CD4-positive, alpha-beta memory T cell (primary cell): ENCODE measurements at regions of chr1 and their contacts with region 1.

Region 1: GRCh38 chr1:2044510-2045319 is 5.5 kb upstream of the PRKCZ start:
- DNase-seq: peak; percentile 71 to 85 (median 80)
- H3K4me3 ChIP-seq: peak overlapping the region in 1 of 2 donors; percentile 1
- H3K4me3 Mint-ChIP-seq: peak overlapping the region in 6 of 8 donors; percentile 55 to 78 (median 64)
- H3K27ac ChIP-seq: no peak overlapping the region
- H3K27ac Mint-ChIP-seq: peak overlapping the region in 2 of 7 donors; percentile 61 to 63
- H3K4me1 ChIP-seq: peaks cover 16% of the 10 kb centered on the region
- H3K4me1 Mint-ChIP-seq: peaks cover 7 to 32% (median 17%) of the 10 kb centered on the region in 4 donors
- H3K27me3 ChIP-seq: no peaks in the 10 kb centered on the region
- H3K27me3 Mint-ChIP-seq: peaks cover 0 to 6% of the 10 kb centered on the region in 2 donors

Region 2: DNA sequence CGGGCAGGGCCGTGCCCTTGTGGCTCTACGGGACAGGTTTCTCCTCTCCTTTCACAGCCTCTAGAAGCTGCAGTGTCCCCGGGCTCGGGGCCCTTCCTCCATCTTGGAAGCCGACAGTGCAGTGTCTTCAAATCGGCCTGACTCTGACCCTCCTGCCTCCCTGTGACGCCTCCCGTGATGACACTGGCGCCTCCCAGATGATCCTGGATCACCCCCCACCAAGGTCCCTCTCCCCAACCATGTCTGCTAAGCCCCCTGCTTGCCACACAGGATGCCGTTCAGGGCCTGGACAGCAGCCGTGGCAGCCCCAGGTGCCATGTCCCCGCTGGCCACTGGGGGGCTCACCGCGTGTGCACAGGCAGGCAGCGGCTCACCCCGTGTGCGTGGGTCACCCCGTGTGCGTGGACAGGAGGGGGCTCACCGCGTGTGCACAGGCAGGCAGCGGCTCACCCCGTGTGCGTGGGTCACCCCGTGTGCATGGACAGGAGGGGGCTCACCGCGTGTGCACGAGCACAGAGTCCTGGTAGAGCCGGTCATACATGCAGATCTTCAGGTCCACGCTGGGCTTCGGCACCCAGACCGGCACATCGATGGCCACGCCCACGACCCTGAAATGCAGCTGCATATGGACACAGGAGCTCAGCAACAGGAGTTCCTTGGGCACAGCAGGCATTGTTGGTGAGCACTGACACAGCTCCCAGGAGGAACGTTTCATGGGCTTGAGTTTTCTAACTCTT is 100.7 kb before region 1 on chr1:
- CTCF ChIA-PET with region 1: interaction called, 40 read pairs
- POLR2A ChIA-PET with region 1: interaction called, 3 read pairs
- intact Hi-C with region 1: no loop called
- DNase-seq: peak in 4 of 5 donors; percentile 45 to 48 (median 46)
- H3K4me3 ChIP-seq: no peak overlapping the region
- H3K4me3 Mint-ChIP-seq: peak overlapping the region in 6 of 8 donors; percentile 15 to 63 (median 48)
- H3K27ac ChIP-seq: no peak overlapping the region
- H3K27ac Mint-ChIP-seq: no peak overlapping the region
- H3K4me1 ChIP-seq: peaks cover 4% of the 10 kb centered on the region
- H3K4me1 Mint-ChIP-seq: peaks cover 0 to 5% (median 2%) of the 10 kb centered on the region in 4 donors
- H3K27me3 ChIP-seq: no peaks in the 10 kb centered on the region
- H3K27me3 Mint-ChIP-seq: peaks cover 0 to 2% of the 10 kb centered on the region in 2 donors

Region 3: DNA sequence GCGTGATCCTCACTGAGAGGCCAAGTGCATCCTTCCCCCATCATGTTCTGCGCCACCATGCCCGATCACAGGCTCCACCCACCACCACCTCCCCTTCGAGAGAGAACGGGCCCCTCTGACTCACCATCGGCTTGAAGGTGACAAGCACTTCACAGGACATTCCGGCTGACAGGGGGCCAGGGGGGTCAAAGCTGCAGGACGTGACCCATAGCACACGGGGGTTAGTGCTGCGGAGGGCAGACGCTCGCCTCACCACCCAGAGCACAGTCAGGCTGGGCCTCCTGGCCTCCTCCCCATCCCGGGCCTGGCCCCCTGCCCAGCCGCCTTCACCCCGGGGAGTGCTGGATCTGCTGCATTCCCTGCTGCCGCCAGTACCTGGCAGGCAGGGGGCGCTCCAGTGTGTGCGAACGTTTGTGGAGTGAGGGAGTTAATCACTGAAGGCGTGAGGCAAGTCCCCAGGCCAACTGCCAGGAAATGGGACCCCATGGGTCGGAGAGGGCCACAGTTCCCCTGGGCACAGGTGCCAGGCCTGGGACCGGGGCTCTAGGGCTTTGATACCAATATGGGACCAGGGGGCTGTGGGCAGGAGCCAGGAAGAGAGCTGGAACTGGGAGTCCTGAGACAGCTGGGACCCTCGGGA is 84.8 kb before region 1 on chr1:
- CTCF ChIA-PET with region 1: interaction called, 26 read pairs
- POLR2A ChIA-PET with region 1: interaction called, 3 read pairs
- intact Hi-C with region 1: no loop called
- DNase-seq: peak in 4 of 5 donors; percentile 39 to 51 (median 43)
- H3K4me3 ChIP-seq: no peak overlapping the region
- H3K4me3 Mint-ChIP-seq: no peak overlapping the region
- H3K27ac ChIP-seq: no peak overlapping the region
- H3K27ac Mint-ChIP-seq: no peak overlapping the region
- H3K4me1 ChIP-seq: no peaks in the 10 kb centered on the region
- H3K4me1 Mint-ChIP-seq: no peaks in the 10 kb centered on the region
- H3K27me3 ChIP-seq: peaks cover 7% of the 10 kb centered on the region
- H3K27me3 Mint-ChIP-seq: peaks cover 15 to 18% of the 10 kb centered on the region in 2 donors

Region 4: GRCh38 chr1:2055911-2056575 is 11.3 kb after region 1 on chr1:
- CTCF ChIA-PET with region 1: interaction called, 11 read pairs
- POLR2A ChIA-PET with region 1: no interaction called
- intact Hi-C with region 1: no loop called
- DNase-seq: peak in 1 of 5 donors; percentile 33
- H3K4me3 ChIP-seq: no peak overlapping the region
- H3K4me3 Mint-ChIP-seq: no peak overlapping the region
- H3K27ac ChIP-seq: no peak overlapping the region
- H3K27ac Mint-ChIP-seq: no peak overlapping the region
- H3K4me1 ChIP-seq: peaks cover 9% of the 10 kb centered on the region
- H3K4me1 Mint-ChIP-seq: peaks cover 1 to 20% (median 5%) of the 10 kb centered on the region in 4 donors
- H3K27me3 ChIP-seq: no peaks in the 10 kb centered on the region
- H3K27me3 Mint-ChIP-seq: no peaks in the 10 kb centered on the region

Region 5: DNA sequence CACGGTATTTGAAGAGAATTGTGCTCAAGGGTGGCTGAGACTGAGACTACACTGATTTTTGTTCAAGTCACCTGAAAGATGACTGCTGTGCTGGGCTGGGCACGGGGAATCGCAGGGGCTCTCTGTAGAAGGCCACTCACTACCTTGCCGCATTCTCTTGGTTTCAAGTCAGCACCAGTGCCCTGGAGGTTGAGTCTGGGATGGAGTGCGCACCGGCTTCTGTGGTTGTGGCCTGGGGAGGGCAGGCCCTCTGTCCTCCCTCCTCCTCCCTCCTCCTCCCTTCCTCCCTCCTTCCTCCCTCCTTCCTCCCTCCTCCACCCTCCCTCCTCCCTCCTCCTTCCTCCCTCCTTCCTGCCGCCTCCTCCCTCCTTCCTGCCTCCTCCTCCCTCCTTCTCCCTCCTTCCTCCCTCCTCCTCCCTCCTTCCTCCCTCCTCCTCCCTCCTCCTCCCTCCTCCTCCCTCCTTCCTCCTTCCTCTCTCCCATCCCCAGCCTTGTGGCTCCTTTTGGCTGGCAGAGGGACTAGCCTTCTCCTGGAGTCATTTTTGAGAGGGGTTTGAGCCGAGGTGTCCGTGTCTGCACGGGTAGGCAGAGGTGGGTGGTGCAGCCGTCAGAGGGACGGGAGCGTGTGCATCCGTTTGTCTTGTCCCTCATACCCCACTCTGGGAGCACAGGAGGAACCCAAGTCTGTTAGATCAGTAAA is 356.4 kb after region 1 on chr1:
- CTCF ChIA-PET with region 1: no interaction called
- POLR2A ChIA-PET with region 1: no interaction called
- intact Hi-C with region 1: no loop called
- DNase-seq: no peak
- H3K4me3 ChIP-seq: no peak overlapping the region
- H3K4me3 Mint-ChIP-seq: peak overlapping the region in 1 of 8 donors; percentile 48
- H3K27ac ChIP-seq: no peak overlapping the region
- H3K27ac Mint-ChIP-seq: peak overlapping the region in 6 of 7 donors; percentile 19 to 79 (median 66)
- H3K4me1 ChIP-seq: no peaks in the 10 kb centered on the region
- H3K4me1 Mint-ChIP-seq: peaks cover 4 to 30% (median 6%) of the 10 kb centered on the region in 4 donors
- H3K27me3 ChIP-seq: no peaks in the 10 kb centered on the region
- H3K27me3 Mint-ChIP-seq: no peaks in the 10 kb centered on the region